ENCODE measurements at regions of chr18 and their contacts with region 1.

Region 1: DNA sequence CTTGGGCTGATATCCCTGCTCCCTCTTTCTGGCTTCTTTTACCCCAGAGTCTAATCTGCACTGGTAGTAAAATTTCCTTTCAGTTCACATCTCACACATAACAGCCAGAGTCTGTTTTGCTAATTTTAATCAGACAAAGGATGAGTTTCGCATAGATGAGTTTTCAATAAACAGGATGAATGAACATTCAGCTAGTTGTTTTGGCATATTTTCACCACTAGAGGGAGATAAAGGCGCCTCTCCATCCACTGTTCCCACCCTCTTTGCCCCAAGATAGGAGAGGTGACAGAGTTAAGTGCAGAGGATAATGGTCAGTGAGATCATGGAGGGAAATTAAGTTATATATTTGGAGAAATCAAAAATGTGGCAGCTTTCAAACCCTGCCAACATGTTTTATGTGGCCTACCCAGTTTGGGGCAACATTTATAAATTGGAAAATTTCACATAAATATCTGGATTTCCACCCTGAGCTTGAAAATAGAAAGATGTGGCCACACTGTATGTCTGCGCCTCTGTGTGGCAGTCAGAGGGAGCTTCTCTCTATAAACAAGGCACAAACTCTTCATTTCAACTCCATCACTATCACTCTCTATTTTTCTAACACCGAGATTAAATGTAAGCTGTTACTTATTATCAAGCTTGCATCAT is 48.5 kb upstream of the DTNA start:
- DNase-seq: no peak
- H3K4me3 ChIP-seq: no peak overlapping the region
- CTCF ChIP-seq: peak; percentile 74

Region 2: GRCh38 chr18:34122724-34123334 is 538.8 kb before region 1 on chr18:
- CTCF ChIA-PET with region 1: interaction called, 13 read pairs
- POLR2A ChIA-PET with region 1: no interaction called
- DNase-seq: no peak
- H3K4me3 ChIP-seq: no peak overlapping the region
- CTCF ChIP-seq: peak; percentile 78

Region 3: GRCh38 chr18:34358923-34359322 is 302.7 kb before region 1 on chr18:
- CTCF ChIA-PET with region 1: no interaction called
- POLR2A ChIA-PET with region 1: no interaction called
- DNase-seq: no peak
- H3K4me3 ChIP-seq: no peak overlapping the region
- CTCF ChIP-seq: no peak

Region 4: DNA sequence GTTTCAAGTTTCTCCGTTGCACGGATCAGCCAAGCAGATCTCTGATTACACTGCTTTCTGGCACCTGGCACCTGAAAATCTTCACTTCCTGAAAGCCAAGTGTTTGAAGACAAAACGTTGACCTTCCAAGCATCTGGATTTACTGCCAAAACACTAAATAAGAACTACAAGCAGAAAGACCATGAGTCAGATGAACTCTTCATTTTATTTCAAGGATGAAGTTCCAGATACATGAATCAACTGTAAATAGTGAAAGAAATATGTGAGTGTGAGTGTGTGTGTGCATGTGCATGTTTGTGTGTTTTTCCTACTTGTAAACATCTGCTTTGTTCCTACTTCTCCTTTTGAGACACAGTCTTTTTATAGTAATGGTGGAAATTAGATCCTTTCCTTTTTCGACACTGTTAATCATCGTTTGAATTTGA is 11.5 kb before region 1 on chr18:
- CTCF ChIA-PET with region 1: interaction called, 33 read pairs
- POLR2A ChIA-PET with region 1: no interaction called
- DNase-seq: no peak
- H3K4me3 ChIP-seq: no peak overlapping the region
- CTCF ChIP-seq: no peak

Region 5: DNA sequence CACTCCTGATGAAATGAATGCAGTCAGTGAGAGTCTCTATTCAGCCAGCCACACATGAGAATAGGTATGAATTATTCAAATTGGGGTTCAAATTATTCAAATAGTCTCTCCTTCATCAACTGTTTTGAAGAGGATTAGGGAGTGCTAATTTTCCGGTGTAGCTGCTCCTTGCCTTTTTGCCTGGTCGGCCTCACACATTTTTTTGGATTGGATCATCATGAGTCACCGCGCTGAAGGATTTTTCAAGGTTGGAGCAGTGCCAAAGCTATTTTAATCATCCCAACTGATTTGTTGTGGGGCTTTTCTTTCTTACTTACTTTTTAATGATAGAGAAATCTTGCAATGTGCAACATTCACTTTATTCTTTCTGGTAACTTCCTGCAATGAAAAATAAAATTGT is 46.1 kb after region 1 on chr18:
- CTCF ChIA-PET with region 1: interaction called, 44 read pairs
- POLR2A ChIA-PET with region 1: no interaction called
- DNase-seq: peak; percentile 63
- H3K4me3 ChIP-seq: no peak overlapping the region
- CTCF ChIP-seq: no peak

Region 6: GRCh38 chr18:34738176-34738894 is 76.7 kb after region 1 on chr18:
- CTCF ChIA-PET with region 1: interaction called, 10 read pairs
- POLR2A ChIA-PET with region 1: no interaction called
- DNase-seq: no peak
- H3K4me3 ChIP-seq: no peak overlapping the region
- CTCF ChIP-seq: no peak

Region 7: GRCh38 chr18:34780856-34781255 is 119.3 kb after region 1 on chr18:
- CTCF ChIA-PET with region 1: interaction called, 251 read pairs
- POLR2A ChIA-PET with region 1: no interaction called
- DNase-seq: no peak
- H3K4me3 ChIP-seq: no peak overlapping the region
- CTCF ChIP-seq: no peak

Measured in AG04449 (cell line).